ENCODE measurements at regions of chr11 and their contacts with region 1.

Region 1: DNA sequence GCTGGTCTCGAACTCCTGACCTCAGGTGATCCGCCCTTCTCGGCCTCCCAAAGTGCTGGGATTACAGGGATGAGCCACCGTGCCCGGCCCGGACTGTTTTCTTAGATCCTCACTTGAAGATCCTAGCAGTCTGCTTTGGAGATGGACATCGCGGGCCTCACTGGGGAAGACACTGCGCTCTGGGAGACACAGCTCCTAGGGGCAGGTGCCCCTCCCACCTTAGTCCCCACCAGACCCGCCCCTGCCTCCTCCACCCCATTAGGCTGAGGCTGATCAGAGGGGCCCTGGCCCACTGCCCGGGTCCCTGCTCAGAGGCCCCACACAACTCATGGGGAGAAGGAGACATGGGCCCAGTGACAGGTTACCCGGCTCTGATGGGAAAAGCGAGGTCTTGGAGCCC is 11.3 kb upstream of the LTO1 start:
- DNase-seq: peak in 1 of 2 experiments; percentile 9
- H3K4me3 ChIP-seq: no peak overlapping the region
- H3K27ac ChIP-seq: no peak overlapping the region
- H3K4me1 ChIP-seq: peaks cover 63% of the 10 kb centered on the region
- H3K27me3 ChIP-seq: no peaks in the 10 kb centered on the region
- CTCF ChIP-seq: no peak

Region 2: DNA sequence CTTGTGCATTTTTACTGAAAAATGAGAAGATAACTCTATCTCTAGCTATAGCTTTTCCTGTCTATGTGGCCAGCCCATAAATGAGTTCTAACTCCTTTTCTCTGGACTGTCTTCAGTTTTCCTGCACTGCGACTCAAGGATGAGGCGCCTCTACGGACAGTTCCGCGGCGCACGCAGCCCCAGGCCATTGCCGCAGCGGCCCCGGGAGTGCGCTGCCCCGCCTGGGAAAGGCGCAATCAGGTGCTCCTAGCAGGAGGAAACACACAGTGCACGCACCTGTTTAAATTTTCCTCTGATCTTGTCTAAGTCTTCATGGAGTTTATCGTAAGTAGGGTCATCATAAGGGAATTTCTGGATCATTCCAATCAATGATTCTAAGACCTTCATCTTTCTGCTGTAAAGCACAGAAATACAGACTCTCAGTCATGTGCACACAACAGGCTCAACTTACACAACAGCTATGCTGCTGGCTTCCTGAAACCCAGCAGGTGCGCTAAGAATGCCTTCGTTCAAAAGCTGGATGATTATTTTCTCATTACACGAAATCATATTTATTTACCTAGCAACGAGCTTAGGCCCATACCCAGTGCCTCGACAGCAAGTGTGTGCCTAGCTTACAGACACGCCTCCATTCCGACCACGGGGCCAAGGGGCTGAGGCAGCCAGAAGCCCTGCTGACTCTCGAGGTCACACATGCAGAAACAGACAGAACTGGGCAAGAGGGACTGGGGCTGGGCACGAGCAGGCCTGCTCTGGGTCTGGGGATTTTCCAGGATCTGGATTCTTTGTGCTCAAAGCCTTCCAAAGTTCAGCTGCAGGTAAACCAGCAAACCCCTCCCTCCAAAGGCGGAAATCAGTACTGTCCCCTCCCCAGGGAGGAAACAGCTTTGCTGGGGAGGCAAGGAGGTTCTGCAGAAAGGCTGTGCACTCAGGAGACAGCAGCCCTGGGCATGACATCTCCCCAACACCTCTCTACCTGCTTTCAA is 18.5 kb before region 1 on chr11:
- CTCF ChIA-PET with region 1: no interaction called
- POLR2A ChIA-PET with region 1: no interaction called
- intact Hi-C with region 1: no loop called
- DNase-seq: no peak
- H3K4me3 ChIP-seq: no peak overlapping the region
- H3K27ac ChIP-seq: no peak overlapping the region
- H3K4me1 ChIP-seq: peaks cover under 1% of the 10 kb centered on the region; the same call in 1 of the 2 replicates
- H3K27me3 ChIP-seq: no peaks in the 10 kb centered on the region
- CTCF ChIP-seq: no peak

Region 3: GRCh38 chr11:69718147-69718546 is 31.7 kb after region 1 on chr11:
- CTCF ChIA-PET with region 1: no interaction called
- POLR2A ChIA-PET with region 1: no interaction called
- intact Hi-C with region 1: loop called (anchors 2 kb)
- DNase-seq: peak; percentile 47 to 61
- H3K4me3 ChIP-seq: no peak overlapping the region
- H3K27ac ChIP-seq: no peak overlapping the region
- H3K4me1 ChIP-seq: no peaks in the 10 kb centered on the region
- H3K27me3 ChIP-seq: no peaks in the 10 kb centered on the region
- CTCF ChIP-seq: peak; percentile 83

Region 4: GRCh38 chr11:69801519-69802335 is 115.3 kb after region 1 on chr11:
- CTCF ChIA-PET with region 1: interaction called, 16 read pairs
- POLR2A ChIA-PET with region 1: no interaction called
- intact Hi-C with region 1: no loop called
- DNase-seq: peak in 1 of 2 experiments; percentile 56
- H3K4me3 ChIP-seq: no peak overlapping the region
- H3K27ac ChIP-seq: no peak overlapping the region
- H3K4me1 ChIP-seq: peaks cover 2% of the 10 kb centered on the region
- H3K27me3 ChIP-seq: no peaks in the 10 kb centered on the region
- CTCF ChIP-seq: peak; percentile 98

Region 5: DNA sequence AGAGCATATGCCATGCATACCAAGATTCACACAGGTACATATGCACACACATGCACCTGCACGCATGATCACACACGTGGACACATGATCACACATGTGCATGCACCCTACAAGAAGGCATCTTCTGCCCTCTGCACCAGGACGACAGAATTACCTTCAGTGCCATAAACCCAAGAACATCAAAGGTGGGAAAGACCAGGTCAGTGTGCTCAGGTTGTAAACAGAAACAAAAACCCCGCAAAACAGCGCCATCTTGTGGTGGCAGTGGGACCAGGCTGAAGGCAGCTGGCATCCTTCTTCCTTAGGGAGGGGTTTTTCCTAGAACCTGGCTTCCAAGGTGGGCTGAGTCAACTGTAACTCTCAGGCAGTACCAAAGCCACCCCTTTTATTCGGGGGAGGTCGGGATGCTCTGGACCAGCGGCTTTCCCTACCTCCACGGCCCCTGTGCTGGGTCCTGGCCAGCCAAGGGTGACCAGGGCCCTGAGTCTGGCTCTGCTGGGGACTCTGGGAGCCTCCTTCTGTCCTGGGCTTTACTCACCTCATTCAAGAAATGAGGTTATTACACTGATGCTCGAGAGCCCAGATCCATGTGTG is 202.1 kb after region 1 on chr11:
- CTCF ChIA-PET with region 1: no interaction called
- POLR2A ChIA-PET with region 1: no interaction called
- intact Hi-C with region 1: loop called (anchors 1 kb)
- DNase-seq: peak; percentile 70 to 85
- H3K4me3 ChIP-seq: no peak overlapping the region
- H3K27ac ChIP-seq: no peak overlapping the region
- H3K4me1 ChIP-seq: peaks cover 41% of the 10 kb centered on the region
- H3K27me3 ChIP-seq: no peaks in the 10 kb centered on the region
- CTCF ChIP-seq: peak; percentile 97

Region 6: GRCh38 chr11:69909561-69910496 is 223.4 kb after region 1 on chr11:
- CTCF ChIA-PET with region 1: no interaction called
- POLR2A ChIA-PET with region 1: interaction called, 6 read pairs
- intact Hi-C with region 1: loop called (anchors 1 kb)
- DNase-seq: peak in 1 of 2 experiments; percentile 21
- H3K4me3 ChIP-seq: no peak overlapping the region
- H3K27ac ChIP-seq: no peak overlapping the region
- H3K4me1 ChIP-seq: peaks cover 98% of the 10 kb centered on the region
- H3K27me3 ChIP-seq: no peaks in the 10 kb centered on the region
- CTCF ChIP-seq: peak; percentile 86

Region 7: GRCh38 chr11:70016666-70017367 is 330.4 kb after region 1 on chr11:
- CTCF ChIA-PET with region 1: no interaction called
- POLR2A ChIA-PET with region 1: no interaction called
- intact Hi-C with region 1: no loop called
- DNase-seq: peak; percentile 69 to 97
- H3K4me3 ChIP-seq: no peak overlapping the region; the same call in 1 of the 2 replicates
- H3K27ac ChIP-seq: peak overlapping the region; percentile 91
- H3K4me1 ChIP-seq: peaks cover 56% of the 10 kb centered on the region
- H3K27me3 ChIP-seq: no peaks in the 10 kb centered on the region
- CTCF ChIP-seq: no peak

Region 8: DNA sequence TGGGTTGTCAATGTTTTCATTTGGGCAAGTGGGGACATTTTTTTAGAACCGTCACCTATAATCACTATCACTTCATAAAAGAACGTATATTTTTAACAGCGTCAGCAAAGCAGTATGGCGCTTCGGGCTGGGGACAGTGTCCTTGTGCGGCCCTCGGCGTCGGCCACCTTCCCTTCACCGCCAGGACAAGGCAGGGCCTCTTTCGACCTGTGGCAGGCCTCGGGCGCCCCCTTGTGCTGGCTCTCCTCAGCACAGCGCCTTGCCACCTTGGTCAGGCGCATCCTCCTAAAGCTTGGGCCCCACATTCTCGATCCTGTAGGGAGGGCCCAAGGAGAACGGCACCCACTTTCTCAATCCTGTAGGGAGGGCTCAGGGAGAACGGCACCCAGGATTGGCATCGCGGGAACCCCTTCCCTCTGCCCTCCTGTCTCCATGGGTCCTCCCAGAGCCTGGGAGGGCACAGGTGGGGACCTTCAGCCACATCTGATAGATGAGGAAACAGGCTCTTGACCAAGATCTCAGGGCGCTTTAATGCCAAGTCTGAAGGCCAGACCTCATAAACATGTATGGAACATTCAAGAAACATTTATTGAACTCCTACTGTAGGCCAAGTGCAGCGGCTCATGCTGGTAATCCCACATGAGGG is 505.2 kb after region 1 on chr11:
- CTCF ChIA-PET with region 1: interaction called, 6 read pairs
- POLR2A ChIA-PET with region 1: no interaction called
- intact Hi-C with region 1: loop called (anchors 1 kb)
- DNase-seq: peak; percentile 62 to 90
- H3K4me3 ChIP-seq: no peak overlapping the region
- H3K27ac ChIP-seq: no peak overlapping the region
- H3K4me1 ChIP-seq: peaks cover 13% of the 10 kb centered on the region; the same call in 1 of the 2 replicates
- H3K27me3 ChIP-seq: no peaks in the 10 kb centered on the region
- CTCF ChIP-seq: peak; percentile 93

Region 9: DNA sequence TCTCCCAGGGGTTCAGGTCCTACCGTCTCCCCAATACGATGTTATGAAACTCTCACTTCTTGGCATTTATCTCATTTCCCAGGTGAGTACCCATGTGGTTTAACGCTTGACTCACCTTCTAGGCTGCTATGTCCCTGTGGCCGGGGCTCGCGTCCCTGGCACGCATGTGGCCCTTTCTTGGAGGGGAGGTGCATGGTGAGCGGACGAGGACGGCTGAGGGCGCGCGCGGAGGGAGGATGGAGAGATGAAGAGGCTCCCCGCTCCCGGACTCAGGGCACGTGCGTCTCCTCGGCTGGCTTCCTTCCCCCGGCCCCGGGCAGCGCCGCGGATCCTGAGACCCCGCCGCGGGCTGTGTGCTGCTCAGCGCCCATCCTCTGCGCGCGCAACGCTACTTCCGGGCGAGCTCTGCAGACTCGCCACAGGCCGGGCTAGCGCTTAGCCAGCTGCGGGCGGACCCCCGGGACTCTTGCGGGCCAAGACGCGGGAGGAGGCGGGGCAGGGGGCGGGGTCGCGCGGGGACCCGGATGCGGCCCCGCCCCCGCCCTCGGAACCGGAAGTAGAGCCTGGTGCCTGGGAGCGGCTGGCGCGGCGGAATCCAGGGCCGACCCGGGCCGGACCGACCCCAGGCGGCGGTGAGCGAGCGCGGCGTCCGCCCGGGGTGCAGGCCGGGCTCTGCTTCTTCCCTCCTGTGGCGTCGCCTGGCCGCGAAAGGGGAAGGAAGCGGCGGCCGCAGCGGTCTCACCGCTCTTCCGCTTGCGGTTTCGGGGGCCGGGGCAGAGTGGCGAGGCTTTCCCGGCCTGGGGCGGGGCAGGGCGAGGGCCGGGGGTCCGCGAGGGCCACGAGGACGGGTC is 711.8 kb after region 1 on chr11 and contains the start of gene CTTN:
- CTCF ChIA-PET with region 1: no interaction called
- POLR2A ChIA-PET with region 1: no interaction called
- intact Hi-C with region 1: loop called (anchors 2 kb)
- DNase-seq: peak; percentile 84
- H3K4me3 ChIP-seq: peak within 1 kb of the TSS; percentile 71
- H3K27ac ChIP-seq: peak within 1 kb of the TSS; percentile 88
- H3K4me1 ChIP-seq: peaks cover 43% of the 10 kb centered on the region
- H3K27me3 ChIP-seq: no peaks in the 10 kb centered on the region
- CTCF ChIP-seq: no peak
- total RNA-seq, gene CTTN: 533 and 570 TPM in 2 replicates

Measured in PC-9 (cell line).